ENCODE measurements at regions of chr10 and their contacts with region 1.

Region 1: GRCh38 chr10:26556748-26557640 is 118.9 kb downstream of the APBB1IP start:
- DNase-seq: no peak
- H3K4me3 ChIP-seq: no peak overlapping the region
- H3K27ac ChIP-seq: no peak overlapping the region
- H3K4me1 ChIP-seq: peaks cover 7 to 23% (median 16%) of the 10 kb centered on the region in 3 donors
- H3K27me3 ChIP-seq: peaks cover 0 to 22% (median 0%) of the 10 kb centered on the region in 4 donors
- CTCF ChIP-seq: peak; percentile 50 to 85 (median 73)
- POLR2A ChIP-seq: no peak

Region 2: GRCh38 chr10:25875556-25876165 is 681.3 kb before region 1 on chr10:
- intact Hi-C with region 1: loop called (anchors 10 kb)
- DNase-seq: no peak
- H3K4me3 ChIP-seq: no peak overlapping the region
- H3K27ac ChIP-seq: no peak overlapping the region
- H3K4me1 ChIP-seq: no peaks in the 10 kb centered on the region
- H3K27me3 ChIP-seq: no peaks in the 10 kb centered on the region
- CTCF ChIP-seq: peak in 5 of 6 experiments; percentile 64 to 71 (median 68)
- POLR2A ChIP-seq: no peak

Region 3: GRCh38 chr10:26334932-26335573 is 221.9 kb before region 1 on chr10:
- intact Hi-C with region 1: loop called (anchors 5 kb)
- DNase-seq: no peak
- H3K4me3 ChIP-seq: peak overlapping the region in 2 of 4 donors; percentile 18 to 54
- H3K27ac ChIP-seq: no peak overlapping the region
- H3K4me1 ChIP-seq: peaks cover 0 to 4% (median 0%) of the 10 kb centered on the region in 3 donors
- H3K27me3 ChIP-seq: no peaks in the 10 kb centered on the region
- CTCF ChIP-seq: peak; percentile 51 to 81 (median 75)
- POLR2A ChIP-seq: no peak

Region 4: DNA sequence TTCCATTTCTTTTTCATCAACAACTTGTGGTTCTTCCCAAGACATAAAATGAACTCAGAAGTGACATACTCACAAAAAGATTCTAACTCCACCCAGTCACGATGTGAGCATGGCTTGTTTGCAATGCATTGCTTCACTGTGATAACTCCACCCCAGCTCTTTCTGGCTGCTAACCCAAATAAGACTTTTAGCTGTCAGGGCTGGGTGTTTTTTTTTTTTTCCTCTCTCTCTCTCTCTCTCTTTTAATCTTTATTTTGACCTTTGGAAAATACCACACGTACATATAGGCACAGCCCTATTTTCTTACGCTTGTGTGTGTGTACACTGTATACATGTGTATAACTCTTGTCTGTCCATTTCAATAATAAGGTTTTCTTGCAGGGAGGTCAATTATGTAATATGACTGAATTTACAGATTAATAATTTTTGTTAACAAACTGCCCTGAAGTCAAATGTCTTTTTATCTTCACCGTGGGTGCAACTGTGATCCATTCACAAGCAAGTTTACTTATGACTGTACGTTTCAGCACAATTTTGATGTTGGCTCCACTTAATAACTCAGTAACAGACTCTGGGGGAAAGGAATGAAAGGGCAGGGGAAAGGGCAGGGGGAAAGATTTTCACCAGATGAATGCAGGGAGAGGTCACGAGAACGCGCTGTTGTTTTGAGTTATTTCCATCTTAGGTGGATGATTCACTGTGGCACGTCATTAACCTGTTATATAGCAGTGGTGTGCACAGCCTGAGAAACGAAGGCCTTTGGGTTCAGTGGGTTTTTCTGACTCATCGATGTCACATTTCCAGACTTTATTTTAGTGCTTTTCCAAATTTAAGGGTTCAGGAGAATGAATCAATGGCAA is 69.8 kb before region 1 on chr10:
- intact Hi-C with region 1: no loop called
- DNase-seq: no peak
- H3K4me3 ChIP-seq: peak overlapping the region in 1 of 4 donors; percentile 17
- H3K27ac ChIP-seq: peak overlapping the region in 3 of 4 donors; percentile 38 to 78 (median 73)
- H3K4me1 ChIP-seq: peaks cover 0 to 27% (median 0%) of the 10 kb centered on the region in 3 donors
- H3K27me3 ChIP-seq: no peaks in the 10 kb centered on the region
- CTCF ChIP-seq: no peak
- POLR2A ChIP-seq: peak in 1 of 4 donors; percentile 11

Region 5: GRCh38 chr10:26637521-26638275 is 80.7 kb after region 1 on chr10:
- intact Hi-C with region 1: no loop called
- DNase-seq: no peak
- H3K4me3 ChIP-seq: no peak overlapping the region
- H3K27ac ChIP-seq: no peak overlapping the region
- H3K4me1 ChIP-seq: no peaks in the 10 kb centered on the region
- H3K27me3 ChIP-seq: no peaks in the 10 kb centered on the region
- CTCF ChIP-seq: no peak
- POLR2A ChIP-seq: no peak

Measured in esophagus squamous epithelium (tissue), 5 donors.